Activated T-helper 2 cell treated with anti-CD3 and anti-CD28 coated beads, Interferon-gamma antibody, Interleukin-2, Interleukin-4, amounts not matched to agents 10 μg/mL and 5 μg/mL and 100 μg/mL, durations not matched to agents 14 hours and 24 hours and 36 hours (primary cell): ENCODE measurements at regions of chr4 and their contacts with region 1.

Region 1: DNA sequence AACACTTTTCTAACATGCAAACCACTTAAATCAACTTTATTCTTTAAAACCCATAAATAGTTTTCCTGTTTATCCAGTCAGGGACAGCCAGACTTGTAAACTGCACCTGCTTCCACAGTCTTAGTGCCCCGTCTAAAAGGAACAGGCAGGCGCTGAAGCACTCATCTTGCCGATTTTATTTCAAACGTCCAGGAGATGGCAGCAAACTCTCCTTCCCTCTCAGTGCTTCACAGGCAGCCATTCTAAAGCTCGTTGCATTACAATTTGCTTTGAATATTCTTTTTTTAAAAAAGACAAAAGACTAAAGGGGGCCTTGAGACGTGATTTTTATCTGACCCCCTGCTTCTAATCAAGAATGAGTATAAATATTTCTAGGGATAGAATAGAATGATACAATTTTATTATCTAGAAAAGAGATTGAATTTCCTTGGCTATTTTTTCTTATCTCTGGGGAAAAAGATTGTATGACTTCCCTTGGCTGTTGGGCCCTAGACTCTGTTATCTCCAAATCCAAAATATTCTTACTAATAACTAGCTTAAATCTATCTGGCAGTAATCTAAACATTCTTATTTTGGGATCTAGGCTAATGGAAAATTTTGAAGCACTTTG is 93.6 kb upstream of the MYOZ2 start:
- DNase-seq: peak; percentile 28
- H3K4me3 Mint-ChIP-seq: no peak overlapping the region
- H3K27ac Mint-ChIP-seq: no peak overlapping the region
- H3K4me1 Mint-ChIP-seq: peaks cover 5% of the 10 kb centered on the region
- H3K27me3 Mint-ChIP-seq: peaks cover 9% of the 10 kb centered on the region

Region 2: GRCh38 chr4:118981839-118982381 is 60.1 kb before region 1 on chr4:
- intact Hi-C with region 1: loop called (anchors 5 kb)
- DNase-seq: peak; percentile 10
- H3K4me3 Mint-ChIP-seq: no peak overlapping the region
- H3K27ac Mint-ChIP-seq: no peak overlapping the region
- H3K4me1 Mint-ChIP-seq: peaks cover 2% of the 10 kb centered on the region
- H3K27me3 Mint-ChIP-seq: peaks cover 12% of the 10 kb centered on the region

Region 3: DNA sequence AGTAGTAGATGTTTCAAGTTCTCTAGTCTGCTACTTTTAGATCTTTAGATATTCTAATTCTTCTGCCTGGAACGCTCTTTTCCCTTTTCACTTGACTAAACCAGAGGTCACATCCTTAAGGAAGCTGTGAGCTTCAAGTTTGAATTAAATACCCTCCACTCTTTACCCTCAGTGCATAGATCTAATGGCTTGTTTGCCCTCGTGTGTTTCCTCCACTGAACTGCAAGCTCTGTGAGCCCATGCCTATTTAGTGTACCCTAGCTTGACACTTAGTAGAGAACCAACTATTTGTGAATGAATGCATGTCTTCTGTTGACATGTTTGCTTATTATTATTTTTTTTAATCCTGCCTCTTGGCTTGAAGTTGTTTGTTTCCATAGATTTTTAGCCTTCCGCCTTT is 448.3 kb after region 1 on chr4:
- intact Hi-C with region 1: loop called (anchors 5 kb)
- DNase-seq: no peak
- H3K4me3 Mint-ChIP-seq: no peak overlapping the region
- H3K27ac Mint-ChIP-seq: no peak overlapping the region
- H3K4me1 Mint-ChIP-seq: no peaks in the 10 kb centered on the region
- H3K27me3 Mint-ChIP-seq: no peaks in the 10 kb centered on the region